ENCODE measurements at regions of chr4 and their contacts with region 1.

Region 1: GRCh38 chr4:3106339-3107186 is 32.1 kb downstream of the HTT start:
- DNase-seq: peak; percentile 81
- ATAC-seq: peak; percentile 100
- H3K4me3 Mint-ChIP-seq: no peak overlapping the region
- H3K27ac Mint-ChIP-seq: peak overlapping the region; percentile 73
- H3K4me1 Mint-ChIP-seq: peaks cover 9% of the 10 kb centered on the region
- H3K27me3 Mint-ChIP-seq: no peaks in the 10 kb centered on the region
- CTCF ChIP-seq: no peak

Region 2: GRCh38 chr4:3079694-3080123 is 26.9 kb before region 1 on chr4:
- CTCF ChIA-PET with region 1: interaction called, 3 read pairs
- POLR2A ChIA-PET with region 1: interaction called, 11 read pairs
- intact Hi-C with region 1: loop called (anchors 1 kb)
- DNase-seq: no peak
- ATAC-seq: peak; percentile 61
- H3K4me3 Mint-ChIP-seq: peak overlapping the region; percentile 53
- H3K27ac Mint-ChIP-seq: peak overlapping the region; percentile 95
- H3K4me1 Mint-ChIP-seq: peaks cover 80% of the 10 kb centered on the region
- H3K27me3 Mint-ChIP-seq: no peaks in the 10 kb centered on the region
- CTCF ChIP-seq: no peak

Region 3: DNA sequence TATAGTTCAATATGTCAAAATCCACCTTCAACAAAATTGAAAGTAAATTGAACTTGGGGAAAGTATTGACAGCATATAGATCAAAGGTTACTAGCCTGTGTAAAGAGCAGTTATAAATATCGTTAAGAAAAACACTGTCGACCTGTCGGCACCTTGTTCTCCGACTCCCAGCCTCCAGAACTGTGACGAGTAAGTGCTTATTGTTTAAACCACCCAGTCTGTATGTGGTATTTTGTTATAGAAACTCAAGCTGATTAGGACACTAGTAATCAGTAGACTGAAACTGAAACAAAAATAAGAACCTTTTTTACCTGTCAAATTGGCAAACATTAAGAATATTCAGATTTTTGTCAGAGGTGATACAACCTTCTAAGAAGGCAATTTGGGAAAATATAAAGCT is 15.1 kb before region 1 on chr4:
- CTCF ChIA-PET with region 1: interaction called, 3 read pairs
- POLR2A ChIA-PET with region 1: no interaction called
- intact Hi-C with region 1: loop called (anchors 1 kb)
- DNase-seq: no peak
- ATAC-seq: no peak
- H3K4me3 Mint-ChIP-seq: no peak overlapping the region
- H3K27ac Mint-ChIP-seq: no peak overlapping the region
- H3K4me1 Mint-ChIP-seq: peaks cover 11% of the 10 kb centered on the region
- H3K27me3 Mint-ChIP-seq: no peaks in the 10 kb centered on the region
- CTCF ChIP-seq: no peak

Region 4: GRCh38 chr4:3136453-3136852 is 29.9 kb after region 1 on chr4:
- CTCF ChIA-PET with region 1: interaction called, 20 read pairs
- POLR2A ChIA-PET with region 1: no interaction called
- intact Hi-C with region 1: loop called (anchors 1 kb)
- DNase-seq: no peak
- ATAC-seq: no peak
- H3K4me3 Mint-ChIP-seq: no peak overlapping the region
- H3K27ac Mint-ChIP-seq: no peak overlapping the region
- H3K4me1 Mint-ChIP-seq: no peaks in the 10 kb centered on the region
- H3K27me3 Mint-ChIP-seq: no peaks in the 10 kb centered on the region
- CTCF ChIP-seq: no peak

Region 5: DNA sequence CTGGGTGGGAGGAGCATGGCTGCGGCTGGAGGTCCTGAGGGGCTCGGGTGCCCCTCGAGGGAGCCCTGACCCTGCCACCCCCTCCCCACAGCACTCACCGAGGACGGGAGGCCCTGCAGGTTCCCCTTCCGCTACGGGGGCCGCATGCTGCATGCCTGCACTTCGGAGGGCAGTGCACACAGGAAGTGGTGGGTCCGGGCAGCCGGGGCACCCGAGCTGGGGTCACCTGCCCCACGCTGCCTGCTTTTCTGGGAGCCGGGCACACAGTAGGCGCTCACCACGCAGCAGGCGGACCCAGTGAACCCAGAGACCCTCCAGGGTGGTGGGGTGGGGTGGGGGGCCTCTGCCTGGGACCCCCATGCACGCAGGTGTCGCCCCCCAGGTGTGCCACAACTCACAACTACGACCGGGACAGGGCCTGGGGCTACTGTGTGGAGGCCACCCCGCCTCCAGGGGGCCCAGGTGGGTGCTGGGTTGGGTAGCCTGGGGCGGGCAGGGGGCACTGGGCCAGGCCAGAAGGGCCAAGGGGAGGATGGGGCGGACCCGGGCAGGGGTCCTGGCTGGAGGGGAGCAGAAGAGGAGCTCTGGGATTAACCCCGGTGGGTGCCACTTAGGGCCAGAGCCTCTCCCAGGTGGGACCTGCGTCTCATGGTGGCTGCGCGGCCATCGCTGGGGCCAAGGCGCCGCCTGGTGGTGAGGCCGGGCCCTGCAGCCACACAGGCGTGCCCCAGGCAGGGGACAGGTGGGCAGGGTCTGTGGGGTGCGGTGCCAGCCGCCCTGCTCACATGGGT is 336.6 kb after region 1 on chr4:
- CTCF ChIA-PET with region 1: no interaction called
- POLR2A ChIA-PET with region 1: no interaction called
- intact Hi-C with region 1: loop called (anchors 1 kb)
- DNase-seq: peak; percentile 82
- ATAC-seq: peak; percentile 94
- H3K4me3 Mint-ChIP-seq: no peak overlapping the region
- H3K27ac Mint-ChIP-seq: no peak overlapping the region
- H3K4me1 Mint-ChIP-seq: no peaks in the 10 kb centered on the region
- H3K27me3 Mint-ChIP-seq: no peaks in the 10 kb centered on the region
- CTCF ChIP-seq: peak; percentile 91

Region 6: GRCh38 chr4:3480528-3481112 is 374.1 kb after region 1 on chr4:
- CTCF ChIA-PET with region 1: no interaction called
- POLR2A ChIA-PET with region 1: no interaction called
- intact Hi-C with region 1: loop called (anchors 2 kb)
- DNase-seq: peak; percentile 81
- ATAC-seq: peak; percentile 47
- H3K4me3 Mint-ChIP-seq: no peak overlapping the region
- H3K27ac Mint-ChIP-seq: no peak overlapping the region
- H3K4me1 Mint-ChIP-seq: peaks cover 39% of the 10 kb centered on the region
- H3K27me3 Mint-ChIP-seq: peaks cover 2% of the 10 kb centered on the region
- CTCF ChIP-seq: peak; percentile 80

Region 7: DNA sequence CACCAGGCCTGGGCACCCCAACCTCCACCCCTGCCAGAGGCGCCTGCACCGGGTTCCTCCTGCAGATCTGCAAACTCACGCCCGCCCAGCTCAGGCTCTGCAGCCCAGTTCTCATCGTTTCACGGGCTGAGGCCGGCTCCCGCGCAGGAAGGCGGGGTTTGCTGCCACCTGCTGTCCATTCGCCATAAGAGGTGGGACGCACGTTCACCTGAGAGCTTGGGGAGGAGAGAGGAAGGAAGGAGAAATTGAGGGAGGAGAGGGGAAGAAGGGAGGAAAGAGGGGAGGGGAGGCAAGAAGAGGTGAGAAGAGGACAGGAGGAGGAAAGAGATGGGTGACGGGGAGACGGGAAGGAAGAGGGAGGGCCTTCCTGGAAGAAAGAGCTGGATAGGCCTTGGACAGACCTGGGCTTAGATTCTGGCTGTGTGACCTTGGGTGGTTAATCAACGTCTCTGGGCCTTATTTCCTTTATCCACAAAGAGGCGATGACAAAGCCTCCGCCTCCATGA is 774.1 kb after region 1 on chr4:
- CTCF ChIA-PET with region 1: interaction called, 7 read pairs
- POLR2A ChIA-PET with region 1: no interaction called
- intact Hi-C with region 1: loop called (anchors 1 kb)
- DNase-seq: peak; percentile 59
- ATAC-seq: peak; percentile 90
- H3K4me3 Mint-ChIP-seq: peak overlapping the region; percentile 44
- H3K27ac Mint-ChIP-seq: no peak overlapping the region
- H3K4me1 Mint-ChIP-seq: peaks cover 15% of the 10 kb centered on the region
- H3K27me3 Mint-ChIP-seq: peaks cover 33% of the 10 kb centered on the region
- CTCF ChIP-seq: no peak

Measured in activated B cell treated with CpG ODN at 0.5 μM for 24 hours (primary cell).